ENCODE measurements at regions of chr3 and their contacts with region 1.

Region 1: GRCh38 chr3:37537914-37538691 is 323.6 kb upstream of the CTDSPL start:
- DNase-seq: no peak
- ATAC-seq: peak; percentile 49

Region 2: DNA sequence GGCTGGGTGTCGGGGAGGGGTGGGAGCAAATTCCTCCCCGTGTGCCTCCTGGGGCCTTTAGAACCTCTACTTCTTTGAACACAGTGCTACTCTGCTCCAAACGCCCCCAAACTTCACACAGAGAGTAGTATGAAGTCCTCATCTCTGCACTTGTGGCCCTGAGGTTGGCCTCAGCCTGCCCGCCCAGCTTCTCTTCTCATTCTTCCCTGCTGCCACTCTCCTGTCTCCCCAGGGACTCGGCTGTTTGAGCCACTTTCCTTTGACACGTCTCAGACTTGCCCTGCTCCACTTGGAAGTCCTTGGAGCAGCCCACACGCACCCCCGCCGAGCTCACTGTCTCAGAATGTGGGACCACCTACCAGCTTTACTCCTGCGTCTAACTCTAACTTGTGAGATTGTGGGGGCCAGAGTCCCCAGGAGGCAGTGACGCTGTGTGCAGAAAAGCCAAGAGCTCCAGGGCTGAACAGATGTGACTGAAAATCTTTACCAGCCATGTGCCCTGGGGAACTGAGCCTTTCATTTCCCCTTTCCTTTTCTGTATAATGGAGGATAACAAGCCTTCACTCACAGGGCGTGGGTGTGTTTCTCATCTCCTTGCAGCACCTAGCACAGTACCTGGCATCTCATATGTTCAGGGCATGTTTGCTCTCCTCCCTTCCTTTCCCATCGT is 90.0 kb after region 1 on chr3:
- intact Hi-C with region 1: no loop called
- DNase-seq: no peak
- ATAC-seq: no peak

Region 3: DNA sequence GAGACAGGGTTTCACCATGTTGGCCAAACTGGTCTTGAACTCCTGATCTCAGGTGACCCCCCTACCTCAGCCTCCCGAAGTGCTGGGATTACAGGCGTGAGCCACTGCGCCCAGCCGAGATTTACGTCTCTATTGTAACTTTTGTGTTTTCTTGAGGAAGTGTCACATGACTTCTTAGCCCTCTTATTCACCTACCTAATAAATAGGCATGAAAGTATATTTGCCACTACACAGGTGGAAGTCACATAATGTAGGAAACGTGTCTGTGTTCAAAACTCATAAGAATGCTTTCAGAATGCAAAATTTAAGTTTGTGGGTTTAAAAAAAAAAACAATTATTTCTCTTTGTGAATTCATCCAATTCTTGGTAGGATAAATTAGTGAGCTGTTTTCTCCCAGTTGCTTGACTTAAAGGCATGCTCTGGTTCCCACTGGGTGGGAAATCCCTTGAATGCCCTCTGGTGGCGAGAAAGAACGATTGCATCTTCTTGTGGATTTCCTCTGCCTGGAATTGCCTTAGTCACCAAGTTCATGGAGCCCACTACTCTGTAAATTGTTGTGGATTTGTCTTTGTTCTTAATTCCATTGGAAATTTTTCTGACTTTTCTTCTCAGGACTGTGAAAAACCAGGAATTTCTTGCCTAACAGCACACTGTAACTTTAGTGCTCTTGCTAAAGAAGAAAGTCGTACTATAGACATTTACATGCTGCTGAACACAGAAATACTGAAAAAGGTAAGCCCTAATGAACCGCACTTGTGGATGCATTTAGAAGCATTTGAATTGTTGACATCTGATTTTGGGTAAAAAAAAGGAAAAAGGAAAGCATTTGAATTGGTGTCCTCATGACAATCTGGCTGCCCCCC is 241.4 kb after region 1 on chr3:
- intact Hi-C with region 1: loop called (anchors 10 kb)
- DNase-seq: no peak
- ATAC-seq: peak; percentile 73

Measured in Right ventricle myocardium inferior (tissue), 1 donor.